Spleen (tissue), 13 donors: ENCODE measurements at regions of chr6 and their contacts with region 1.

Region 1: DNA sequence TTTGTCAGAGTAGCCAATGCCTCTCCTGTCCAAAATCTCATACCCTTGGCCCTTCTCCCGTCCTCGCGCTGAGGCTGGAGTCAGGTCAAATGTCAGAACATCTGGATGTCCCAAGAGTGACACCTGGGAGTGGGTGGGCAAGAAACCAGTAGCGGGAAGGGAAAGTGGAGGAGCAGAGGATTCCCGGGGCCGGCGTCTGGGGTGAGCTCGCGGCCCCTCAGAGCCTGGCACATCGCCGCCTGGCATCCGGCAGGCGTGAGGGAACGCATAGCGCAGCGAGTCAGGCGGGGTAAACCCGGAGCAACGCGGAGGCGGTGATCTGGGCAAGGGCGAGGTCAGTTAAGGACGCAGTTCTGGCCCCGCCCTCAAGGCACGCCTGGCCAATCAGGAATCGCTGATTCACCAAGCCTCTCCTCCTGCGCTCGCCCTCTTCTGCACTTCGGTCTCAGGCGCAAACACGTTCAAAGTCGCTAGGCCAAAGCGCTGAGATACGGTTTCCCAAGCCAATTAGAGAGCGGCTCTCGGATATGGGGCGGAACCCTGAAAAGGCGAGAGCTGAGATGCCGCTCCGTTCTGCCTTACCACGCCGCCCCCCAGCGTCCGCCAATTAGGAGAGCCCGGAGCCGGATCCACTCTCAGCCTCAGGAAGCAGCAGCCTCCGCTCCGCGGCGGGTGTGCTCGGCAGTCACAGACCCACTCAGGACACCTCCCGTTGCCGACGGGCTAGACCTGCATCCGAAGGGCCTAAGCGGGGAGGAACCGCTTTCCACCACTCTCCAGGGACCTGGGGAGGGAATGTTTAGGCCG is 22.5 kb downstream of the VPS52 start:
- DNase-seq: peak; percentile 98
- H3K4me3 ChIP-seq: peak overlapping the region; percentile 36 to 73 (median 52)
- H3K27ac ChIP-seq: peak overlapping the region; percentile 89 to 93 (median 91)
- H3K4me1 ChIP-seq: peaks cover 10 to 45% (median 29%) of the 10 kb centered on the region in 6 donors
- H3K27me3 ChIP-seq: peaks cover 0 to 16% (median 0%) of the 10 kb centered on the region in 7 donors
- CTCF ChIP-seq: peak in 7 of 11 experiments; percentile 10 to 58 (median 27)
- POLR2A ChIP-seq: peak; percentile 25 to 77 (median 71)

Region 2: GRCh38 chr6:33161354-33162331 is 87.5 kb before region 1 on chr6:
- intact Hi-C with region 1: loop called (anchors 2 kb)
- DNase-seq: peak; percentile 96
- H3K4me3 ChIP-seq: peak overlapping the region; percentile 24 to 69 (median 45)
- H3K27ac ChIP-seq: peak overlapping the region in 6 of 8 donors; percentile 44 to 72 (median 60)
- H3K4me1 ChIP-seq: peaks cover 0 to 22% (median 15%) of the 10 kb centered on the region in 6 donors
- H3K27me3 ChIP-seq: no peaks in the 10 kb centered on the region
- CTCF ChIP-seq: peak; percentile 81 to 98 (median 94)
- POLR2A ChIP-seq: no peak

Region 3: DNA sequence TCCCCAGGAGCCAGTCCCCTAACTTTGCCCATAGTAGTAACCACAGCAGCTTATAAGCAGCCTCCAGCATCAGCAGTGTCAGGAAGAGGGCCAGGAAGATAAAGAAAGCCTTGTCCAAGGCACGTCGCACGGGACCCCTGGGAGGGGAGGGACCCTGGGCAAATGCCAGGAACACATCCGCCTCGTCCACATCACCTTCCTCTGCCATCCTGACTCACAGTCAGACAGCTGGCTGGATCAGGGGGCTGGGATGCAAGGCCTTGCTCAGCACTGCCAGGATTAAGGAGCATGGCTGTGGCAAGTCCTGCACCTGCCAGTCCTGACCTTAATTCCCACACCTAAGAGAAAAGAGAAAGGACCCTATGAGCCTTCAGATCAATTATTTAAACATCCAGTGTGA is 79.9 kb after region 1 on chr6:
- intact Hi-C with region 1: no loop called
- DNase-seq: no peak
- H3K4me3 ChIP-seq: no peak overlapping the region
- H3K27ac ChIP-seq: peak overlapping the region in 3 of 8 donors; percentile 1 to 58 (median 17)
- H3K4me1 ChIP-seq: peaks cover 0 to 43% (median 11%) of the 10 kb centered on the region in 6 donors
- H3K27me3 ChIP-seq: no peaks in the 10 kb centered on the region
- CTCF ChIP-seq: no peak
- POLR2A ChIP-seq: no peak